Cardiac septum (tissue), 1 donor: ENCODE measurements at regions of chr2 and their contacts with region 1.

Region 1: DNA sequence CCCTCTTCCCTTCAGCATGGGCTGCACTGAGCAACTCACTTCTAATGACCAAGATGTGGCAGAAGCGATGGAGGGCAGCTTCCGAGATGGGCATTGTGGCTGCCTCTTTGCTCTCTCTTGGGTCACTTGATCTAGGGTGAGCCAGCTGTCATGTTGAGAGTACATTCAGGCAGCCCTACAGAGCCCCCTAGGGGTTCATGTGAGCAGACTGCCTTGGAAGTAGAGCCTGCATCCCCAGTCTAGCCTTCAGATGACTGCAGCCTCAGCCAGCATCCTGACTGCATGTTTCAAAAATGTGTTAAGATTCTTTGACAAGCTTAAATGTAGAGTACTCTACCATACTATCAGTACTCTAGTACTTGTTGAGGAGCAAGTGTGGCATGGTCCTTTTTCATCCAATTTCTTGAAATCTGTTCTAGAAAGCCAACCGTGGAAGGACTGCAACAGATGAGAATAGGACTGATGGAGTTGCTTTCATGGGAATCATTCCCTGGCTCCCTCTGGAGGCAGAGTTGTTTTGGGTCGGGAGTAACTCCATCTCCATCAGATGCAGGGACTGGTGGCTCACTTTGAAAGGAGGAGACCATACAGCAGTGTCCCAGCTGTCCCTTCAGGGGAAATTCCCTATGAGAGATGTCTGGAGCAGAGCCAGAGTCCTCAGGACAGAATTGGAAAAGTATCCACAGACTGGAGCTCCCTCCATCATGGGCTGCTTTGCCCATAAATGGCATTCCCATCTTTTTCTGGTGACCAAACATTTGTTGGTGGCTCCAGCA is 144.1 kb downstream of the NCK2 start:
- DNase-seq: no peak

Region 2: GRCh38 chr2:105595536-105595935 is 293.3 kb before region 1 on chr2:
- intact Hi-C with region 1: loop called (anchors 10 kb)
- DNase-seq: no peak

Region 3: DNA sequence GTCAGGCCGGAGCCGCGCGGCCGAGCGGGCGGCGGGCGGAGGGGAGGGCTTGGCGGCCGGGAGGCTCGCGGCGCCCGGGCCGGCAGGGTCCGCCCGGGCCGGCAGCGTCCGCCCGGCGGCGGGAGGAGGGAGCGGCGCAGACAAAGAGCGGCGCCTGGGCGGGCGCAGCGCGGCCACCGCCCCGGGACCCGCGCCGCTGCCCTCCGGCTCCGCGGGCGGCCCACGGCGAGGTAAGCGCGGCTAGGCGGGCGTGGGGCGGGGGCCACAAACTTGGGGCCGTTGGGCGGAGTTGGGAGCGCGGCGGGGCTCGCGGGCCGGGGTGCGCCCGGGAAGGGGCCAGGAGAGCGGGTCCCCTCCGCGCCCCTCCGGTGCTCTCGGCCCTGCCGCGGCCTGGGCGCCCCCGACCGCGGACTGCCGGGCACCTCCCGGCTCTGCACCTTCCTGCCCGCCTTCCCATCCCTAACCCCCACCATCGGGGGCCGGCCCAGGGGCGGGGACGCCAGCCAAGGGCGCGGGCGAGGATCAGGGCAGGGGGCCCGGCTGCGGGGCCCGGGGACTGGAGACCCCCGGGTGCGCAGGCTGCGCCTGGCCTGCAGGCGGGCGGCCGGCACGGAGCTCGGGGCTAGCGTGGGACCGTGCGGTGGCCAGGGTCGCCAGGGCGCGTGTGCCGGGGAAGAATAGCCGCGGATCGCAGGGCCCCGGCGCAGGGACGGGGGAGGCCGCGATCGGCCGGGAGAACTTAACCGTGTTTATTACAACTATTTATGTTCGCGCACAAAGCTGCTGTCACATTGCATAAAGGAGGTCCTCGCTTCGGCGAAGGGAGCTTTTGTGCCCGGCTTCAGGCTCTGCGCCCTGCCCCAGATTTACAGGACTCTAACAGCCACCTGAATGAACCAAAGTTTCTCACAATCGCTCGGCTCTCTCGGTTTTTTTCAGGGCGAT is 143.6 kb before region 1 on chr2 and contains the start of gene NCK2:
- intact Hi-C with region 1: loop called (anchors 5 kb)
- DNase-seq: no peak
- total RNA-seq, gene NCK2: 33.2 TPM

Region 4: GRCh38 chr2:105822186-105822585 is 66.6 kb before region 1 on chr2:
- intact Hi-C with region 1: no loop called
- DNase-seq: no peak

Region 5: GRCh38 chr2:105907184-105907583 is 18.4 kb after region 1 on chr2:
- intact Hi-C with region 1: loop called (anchors 2 kb)
- DNase-seq: no peak

Region 6: DNA sequence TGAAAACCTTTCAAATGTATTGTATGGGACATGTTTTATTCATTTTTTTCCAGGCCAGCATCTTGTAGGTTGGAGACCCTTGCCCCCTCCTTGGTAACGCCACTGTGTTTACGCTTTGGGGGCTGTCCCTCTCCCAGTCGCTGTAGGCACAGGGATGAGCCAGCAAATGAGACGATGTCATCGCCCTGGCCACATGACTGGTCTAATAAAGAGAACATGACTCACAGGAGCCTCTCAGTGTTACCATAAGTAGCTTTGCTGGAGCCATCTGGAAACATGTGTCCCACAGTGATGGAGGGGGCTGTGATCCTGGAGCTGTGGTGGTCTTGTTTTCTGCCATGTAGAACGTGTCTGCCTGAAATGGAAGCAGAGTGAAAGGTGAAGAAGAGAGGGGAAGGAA is 677.2 kb after region 1 on chr2:
- intact Hi-C with region 1: no loop called
- DNase-seq: peak; percentile 84

Region 7: GRCh38 chr2:106708209-106708608 is 819.4 kb after region 1 on chr2:
- intact Hi-C with region 1: no loop called
- DNase-seq: no peak